Activated CD4-positive, alpha-beta T cell treated with anti-CD3 and anti-CD28 coated beads, Interleukin-2, amount 10 ng/mL, durations not matched to agents 24 days and 14 days (primary cell): ENCODE measurements at regions of chr2 and their contacts with region 1.

Region 1: GRCh38 chr2:172555522-172556283 is at the start of gene PDK1:
- DNase-seq: peak; percentile 97
- H3K4me3 Mint-ChIP-seq: peak within 1 kb of the TSS; percentile 98
- H3K27ac Mint-ChIP-seq: peak within 1 kb of the TSS; percentile 97
- H3K4me1 Mint-ChIP-seq: peaks cover 53% of the 10 kb centered on the region
- H3K27me3 Mint-ChIP-seq: no peaks in the 10 kb centered on the region
- total RNA-seq, gene PDK1: 42.6 and 46.9 TPM in 2 replicates

Region 2: DNA sequence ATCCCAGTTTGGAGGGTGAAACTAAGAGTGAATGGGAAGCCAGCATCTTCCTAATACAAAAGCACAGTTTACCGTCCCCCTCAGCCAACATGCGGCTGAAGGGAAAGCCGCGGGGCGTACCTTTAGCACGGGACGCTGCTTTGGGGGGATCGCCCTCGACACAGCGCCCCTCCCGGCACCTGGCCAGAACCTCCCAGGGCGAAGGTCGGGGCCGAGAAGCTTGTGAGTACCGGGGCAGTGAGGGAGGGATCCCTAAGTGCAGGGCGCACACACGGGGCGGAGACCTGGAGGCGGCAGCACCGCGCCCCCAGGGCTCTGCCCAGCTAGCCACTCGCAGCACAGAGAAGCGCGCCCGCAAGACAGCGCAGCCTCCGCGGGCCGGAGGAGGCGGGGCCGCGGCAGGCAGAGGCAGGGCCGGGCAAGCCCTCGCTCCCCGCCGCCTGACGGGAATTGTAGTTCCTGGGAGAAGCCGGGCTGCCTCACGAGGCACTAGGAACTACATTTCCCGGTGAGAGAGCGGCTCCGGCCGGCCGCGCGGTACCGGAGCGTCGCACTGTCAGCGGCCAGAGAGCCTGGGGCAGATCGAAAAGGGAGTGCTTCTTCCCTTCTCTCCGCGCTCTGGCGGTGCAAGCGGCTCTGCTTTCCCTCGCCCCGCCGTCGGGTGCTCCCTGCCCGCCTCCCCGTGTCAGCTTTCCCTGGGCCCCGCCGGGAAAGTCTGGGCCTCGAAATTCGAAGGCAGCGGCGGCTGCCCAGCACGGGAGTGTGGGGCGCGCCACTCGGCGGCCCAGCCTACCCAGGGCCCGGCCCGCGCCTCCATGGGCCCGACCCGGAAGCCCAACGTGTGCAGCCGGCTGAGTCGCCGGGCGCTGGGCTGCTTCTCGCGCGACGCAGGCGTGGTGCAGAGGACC is 1121.7 kb before region 1 on chr2 and contains the starts of genes DCAF17 and METTL8:
- intact Hi-C with region 1: loop called (anchors 10 kb)
- DNase-seq: peak; percentile 98
- H3K4me3 Mint-ChIP-seq: peak within 1 kb of the TSS; percentile 82
- H3K27ac Mint-ChIP-seq: peak within 1 kb of the TSS; percentile 88
- H3K4me1 Mint-ChIP-seq: peaks cover 23% of the 10 kb centered on the region
- H3K27me3 Mint-ChIP-seq: no peaks in the 10 kb centered on the region
- total RNA-seq, gene DCAF17: 27.3 and 27.4 TPM in 2 replicates
- total RNA-seq, gene METTL8: 33.1 and 42.9 TPM in 2 replicates

Region 3: DNA sequence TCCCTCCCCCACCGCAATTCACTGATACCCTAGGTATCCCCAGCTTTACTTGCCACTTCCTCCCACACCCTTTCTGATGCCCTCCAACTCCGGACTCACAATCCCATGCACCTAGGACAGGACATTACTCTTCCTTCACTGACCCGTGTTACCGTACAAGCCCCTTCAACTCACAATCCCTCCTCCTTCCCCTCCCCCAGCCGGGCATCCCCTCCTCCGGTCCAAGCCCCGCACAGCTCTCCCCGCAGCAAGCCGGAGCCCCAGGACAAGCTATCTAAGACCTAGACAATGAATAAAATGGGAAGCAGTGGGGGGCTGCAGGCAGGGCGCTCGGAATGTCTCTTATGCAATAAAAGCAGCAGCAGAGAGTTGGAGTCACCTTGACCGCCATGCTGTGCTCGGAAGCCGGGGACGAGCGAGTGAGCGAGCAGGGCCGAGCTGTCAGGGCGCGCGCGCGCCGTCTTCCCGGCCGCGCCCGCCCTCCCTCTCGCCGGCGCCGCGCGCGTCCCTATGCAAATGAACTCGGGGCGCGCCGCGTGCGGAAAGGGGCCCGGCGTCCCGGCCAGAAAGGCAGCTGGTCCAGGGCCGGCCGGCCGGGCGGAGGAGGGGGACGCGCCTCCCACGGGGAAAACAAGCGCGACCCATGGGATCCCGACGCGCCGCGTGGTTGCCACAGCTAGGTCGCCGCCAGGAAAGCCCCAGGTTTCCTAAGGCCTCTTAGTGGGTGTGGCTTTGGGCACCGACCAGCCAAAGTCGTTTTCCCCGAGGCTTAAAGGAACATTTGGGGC is 661.7 kb before region 1 on chr2 and contains the start of gene SLC25A12:
- intact Hi-C with region 1: loop called (anchors 10 kb)
- DNase-seq: peak; percentile 94
- H3K4me3 Mint-ChIP-seq: peak within 1 kb of the TSS; percentile 95
- H3K27ac Mint-ChIP-seq: peak within 1 kb of the TSS; percentile 92
- H3K4me1 Mint-ChIP-seq: peaks cover 40% of the 10 kb centered on the region
- H3K27me3 Mint-ChIP-seq: peaks cover 2% of the 10 kb centered on the region
- total RNA-seq, gene SLC25A12: 30.9 and 34.3 TPM in 2 replicates

Region 4: GRCh38 chr2:171999604-172000469 is 555.9 kb before region 1 on chr2 and contains the start of gene METAP1D:
- intact Hi-C with region 1: loop called (anchors 5 kb)
- DNase-seq: peak; percentile 97
- H3K4me3 Mint-ChIP-seq: peak within 1 kb of the TSS; percentile 94
- H3K27ac Mint-ChIP-seq: peak within 1 kb of the TSS; percentile 100
- H3K4me1 Mint-ChIP-seq: peaks cover 19% of the 10 kb centered on the region
- H3K27me3 Mint-ChIP-seq: peaks cover 23% of the 10 kb centered on the region
- total RNA-seq, gene METAP1D: 5.0 and 8.1 TPM in 2 replicates

Region 5: GRCh38 chr2:172578054-172578453 is 22.4 kb after region 1 on chr2:
- intact Hi-C with region 1: no loop called
- DNase-seq: no peak
- H3K4me3 Mint-ChIP-seq: no peak overlapping the region
- H3K27ac Mint-ChIP-seq: no peak overlapping the region
- H3K4me1 Mint-ChIP-seq: peaks cover 14% of the 10 kb centered on the region
- H3K27me3 Mint-ChIP-seq: no peaks in the 10 kb centered on the region

Region 6: DNA sequence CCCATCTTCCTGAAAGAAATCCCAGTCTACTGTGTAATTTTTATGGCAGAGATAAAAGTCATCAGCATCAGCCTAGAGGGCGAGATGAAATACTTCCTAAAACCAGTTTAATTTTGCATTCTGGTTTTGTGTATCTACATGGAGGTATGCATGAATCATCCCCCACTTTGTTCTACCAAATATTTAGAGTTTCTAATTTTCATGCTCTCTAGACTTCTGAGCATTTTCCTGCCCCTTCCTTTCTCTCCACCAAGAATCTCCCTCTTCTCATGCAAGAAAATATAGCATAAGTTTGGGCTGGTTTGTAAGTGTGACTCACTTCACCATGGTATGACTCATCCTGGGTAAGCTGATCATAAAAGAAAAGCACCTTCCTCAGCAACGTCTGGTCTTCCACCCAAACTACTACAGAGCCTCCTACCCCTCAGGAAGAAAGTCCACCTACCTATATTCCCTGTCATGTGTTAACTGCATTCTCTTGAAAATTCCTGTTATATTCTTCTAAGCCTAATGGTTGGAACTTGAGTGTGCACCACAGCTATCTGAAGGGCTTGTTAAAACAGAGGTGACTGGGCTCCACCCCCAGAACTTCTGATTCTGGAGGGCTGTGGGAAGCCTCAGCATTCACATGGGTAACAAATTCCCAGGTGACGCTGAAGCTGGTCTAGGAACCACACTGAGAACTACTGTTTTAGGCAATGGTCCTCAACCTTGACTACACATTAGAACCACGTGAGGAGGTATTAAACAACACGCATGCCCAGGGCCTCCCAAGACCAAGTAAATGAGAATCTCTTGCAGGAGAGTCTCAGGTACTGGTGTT is 142.5 kb after region 1 on chr2:
- intact Hi-C with region 1: loop called (anchors 1 kb)
- DNase-seq: peak; percentile 67
- H3K4me3 Mint-ChIP-seq: no peak overlapping the region
- H3K27ac Mint-ChIP-seq: peak overlapping the region; percentile 45
- H3K4me1 Mint-ChIP-seq: peaks cover 19% of the 10 kb centered on the region
- H3K27me3 Mint-ChIP-seq: no peaks in the 10 kb centered on the region

Region 7: DNA sequence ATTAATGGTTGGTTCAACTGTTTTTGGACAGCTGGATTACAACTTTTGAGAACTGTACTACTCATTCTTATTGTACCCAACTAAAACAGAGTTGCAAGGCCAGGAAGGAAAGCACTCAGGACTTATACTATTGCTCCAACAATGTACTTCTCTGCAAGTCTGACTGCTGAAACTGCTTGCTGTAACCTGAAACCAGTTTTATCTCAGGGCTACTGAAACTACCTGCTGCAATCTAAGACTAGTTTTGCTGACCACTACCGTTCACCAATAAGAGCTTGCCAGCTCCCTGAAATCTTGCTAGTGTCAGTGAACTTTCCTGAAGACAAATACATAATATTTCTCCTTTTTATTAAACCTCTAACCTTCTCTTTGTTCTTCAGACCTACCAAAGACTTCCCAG is 956.2 kb after region 1 on chr2:
- intact Hi-C with region 1: no loop called
- DNase-seq: no peak
- H3K4me3 Mint-ChIP-seq: no peak overlapping the region
- H3K27ac Mint-ChIP-seq: no peak overlapping the region
- H3K4me1 Mint-ChIP-seq: no peaks in the 10 kb centered on the region
- H3K27me3 Mint-ChIP-seq: peaks cover 4% of the 10 kb centered on the region

Region 8: DNA sequence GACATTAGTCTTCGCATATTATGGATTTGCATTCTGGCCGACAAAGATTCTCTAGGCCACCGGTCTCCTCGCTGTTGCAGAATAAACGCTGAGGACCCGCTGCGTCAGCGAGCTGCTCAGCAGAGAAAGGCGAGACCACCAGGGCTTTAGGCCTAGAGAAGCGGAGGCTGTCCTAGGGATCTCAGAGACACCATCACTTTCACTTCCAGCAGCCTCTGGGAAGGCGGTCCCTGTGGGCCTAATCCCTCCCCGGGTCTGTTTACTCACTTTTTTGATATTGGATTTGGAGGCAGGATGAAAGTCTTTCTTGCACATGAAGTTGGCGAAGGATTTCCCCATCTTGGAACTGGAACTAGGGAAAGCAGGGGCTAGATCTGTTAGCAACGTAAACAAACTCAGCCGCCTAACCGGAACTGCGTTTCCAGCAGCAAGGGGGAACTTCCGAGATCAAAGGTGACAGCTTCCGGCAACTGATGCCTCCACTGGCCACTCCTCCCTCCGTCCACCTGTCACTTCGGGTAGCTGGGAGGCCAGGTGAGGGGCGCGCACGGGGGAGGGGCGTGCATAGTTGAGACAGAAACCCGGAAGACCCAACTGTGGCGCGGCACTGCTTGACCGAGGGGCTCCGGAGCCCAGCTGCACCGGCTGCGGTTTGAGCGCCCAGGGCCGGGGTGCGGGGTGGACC is 1839.7 kb after region 1 on chr2 and contains the start of gene SCRN3:
- intact Hi-C with region 1: loop called (anchors 10 kb)
- DNase-seq: peak; percentile 94
- H3K4me3 Mint-ChIP-seq: peak within 1 kb of the TSS; percentile 99
- H3K27ac Mint-ChIP-seq: peak within 1 kb of the TSS; percentile 99
- H3K4me1 Mint-ChIP-seq: peaks cover 30% of the 10 kb centered on the region
- H3K27me3 Mint-ChIP-seq: no peaks in the 10 kb centered on the region
- total RNA-seq, gene SCRN3: 18.2 and 19.0 TPM in 2 replicates